B cell (primary cell): ENCODE measurements at regions of chr17 and their contacts with region 1.

Region 1: DNA sequence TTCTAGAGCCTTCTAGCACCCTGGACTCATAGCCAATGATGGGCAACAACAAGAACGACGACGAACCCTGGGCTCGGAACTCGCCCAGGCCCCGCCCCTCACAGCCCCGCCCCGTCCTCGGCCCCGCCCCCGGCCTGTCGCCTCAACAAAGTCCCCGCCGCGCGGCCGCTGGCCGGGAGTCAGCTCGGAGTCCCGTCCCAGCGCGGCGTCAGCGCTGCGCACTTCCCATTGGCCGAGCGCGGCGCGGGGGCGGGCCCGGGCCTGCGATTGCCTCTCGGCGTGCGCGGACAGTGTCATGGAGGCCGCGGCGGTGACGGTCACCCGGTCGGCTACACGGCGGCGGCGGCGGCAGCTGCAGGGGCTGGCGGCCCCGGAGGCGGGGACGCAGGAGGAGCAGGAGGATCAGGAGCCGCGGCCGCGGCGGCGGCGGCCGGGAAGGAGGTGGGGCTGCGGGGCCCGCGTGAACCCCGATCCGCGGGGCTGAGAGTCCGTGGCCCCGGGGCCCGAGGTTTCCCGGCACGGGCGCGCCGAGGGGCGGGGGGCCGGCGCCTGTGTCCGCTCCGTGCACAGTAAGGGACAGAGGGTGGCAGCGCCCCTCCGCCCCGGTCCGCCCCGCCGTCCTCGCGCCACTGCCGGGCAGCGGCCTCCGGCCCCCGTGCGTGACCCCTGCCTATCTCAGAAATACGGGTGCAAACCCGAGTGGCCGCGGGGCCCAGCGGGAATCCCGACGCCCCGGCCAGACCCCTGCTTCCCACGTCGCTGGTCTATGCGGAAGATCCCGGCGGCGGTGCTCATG is at the start of gene ENGASE:
- DNase-seq: peak; percentile 92
- ATAC-seq: peak; percentile 97
- H3K4me3 ChIP-seq: peak within 1 kb of the TSS; percentile 7 to 73 (median 66)
- H3K4me3 Mint-ChIP-seq: peak within 1 kb of the TSS; percentile 88
- H3K27ac ChIP-seq: peak within 1 kb of the TSS; percentile 49 to 70
- H3K27ac Mint-ChIP-seq: peak within 1 kb of the TSS; percentile 68
- H3K4me1 ChIP-seq: peaks cover 11 to 18% of the 10 kb centered on the region in 2 donors
- H3K4me1 Mint-ChIP-seq: peaks cover 10% of the 10 kb centered on the region
- H3K27me3 ChIP-seq: no peaks in the 10 kb centered on the region
- H3K27me3 Mint-ChIP-seq: peaks cover 3% of the 10 kb centered on the region
- CTCF ChIP-seq: no peak
- total RNA-seq, gene ENGASE: 115 and 122 TPM in 2 replicates

Region 2: DNA sequence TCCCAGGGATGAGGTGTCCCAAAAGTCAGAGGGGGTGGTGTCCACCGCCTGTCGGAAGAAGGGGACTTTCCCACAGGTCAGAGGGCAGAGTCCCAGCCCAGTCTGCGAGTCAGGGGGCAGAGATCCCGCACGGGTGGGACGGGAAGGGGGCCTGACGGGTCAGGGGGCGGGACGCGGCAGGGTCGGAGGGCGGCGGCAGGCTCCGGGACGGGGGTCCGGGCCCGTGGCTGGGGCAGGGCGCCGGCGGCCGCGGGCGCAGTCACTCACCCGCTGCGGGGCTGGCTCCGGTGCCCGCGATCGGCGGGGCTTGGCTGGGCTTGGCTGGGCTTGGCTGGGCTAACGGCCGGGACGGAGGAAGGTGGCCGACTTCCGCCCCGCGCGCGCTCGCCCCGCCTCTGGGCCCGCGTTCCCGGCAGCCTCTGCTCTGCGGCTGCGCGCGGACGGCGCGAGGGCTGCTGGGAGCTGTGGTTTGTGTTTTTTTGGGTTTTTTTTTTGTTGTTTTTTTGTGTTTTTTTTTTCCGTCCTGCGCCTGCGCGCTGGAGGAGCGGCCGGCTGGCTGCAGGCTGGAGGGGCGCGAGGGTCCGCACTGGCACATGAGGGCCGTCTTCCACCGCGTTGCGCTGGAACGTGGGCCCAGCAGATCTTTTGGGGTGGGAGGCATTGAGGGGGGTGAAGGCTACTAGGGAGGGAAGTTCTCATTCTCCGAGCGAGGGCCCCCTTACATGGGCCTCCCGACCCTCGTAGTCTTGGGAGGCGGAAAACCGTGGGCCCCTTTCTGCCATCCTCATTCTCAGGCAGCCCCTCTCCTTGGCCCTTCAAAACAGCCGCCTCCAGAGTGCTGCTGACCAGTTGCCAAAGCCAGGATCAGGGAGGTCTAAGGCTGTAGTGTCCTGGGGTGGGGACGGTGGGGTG is 65.2 kb before region 1 on chr17 and contains the start of gene CANT1:
- CTCF ChIA-PET with region 1: interaction called, 3 read pairs
- POLR2A ChIA-PET with region 1: no interaction called
- intact Hi-C with region 1: loop called (anchors 2 kb)
- DNase-seq: peak; percentile 91
- ATAC-seq: peak; percentile 97
- H3K4me3 ChIP-seq: peak within 1 kb of the TSS; percentile 76 to 93 (median 83)
- H3K4me3 Mint-ChIP-seq: peak within 1 kb of the TSS; percentile 96
- H3K27ac ChIP-seq: peak within 1 kb of the TSS; percentile 59 to 86
- H3K27ac Mint-ChIP-seq: peak within 1 kb of the TSS; percentile 96
- H3K4me1 ChIP-seq: peaks cover 26 to 38% of the 10 kb centered on the region in 2 donors
- H3K4me1 Mint-ChIP-seq: peaks cover 48% of the 10 kb centered on the region
- H3K27me3 ChIP-seq: peaks cover 0 to 4% (median 0%) of the 10 kb centered on the region in 4 experiments
- H3K27me3 Mint-ChIP-seq: peaks cover 4% of the 10 kb centered on the region
- CTCF ChIP-seq: no peak
- total RNA-seq, gene CANT1: 44.2 and 49.2 TPM in 2 replicates